GM10248 (cell line): ENCODE measurements at regions of chr2 and their contacts with region 1.

Region 1: GRCh38 chr2:187581125-187581896 is 27.1 kb upstream of the TFPI start:
- DNase-seq: no peak
- CTCF ChIP-seq: peak; percentile 65

Region 2: DNA sequence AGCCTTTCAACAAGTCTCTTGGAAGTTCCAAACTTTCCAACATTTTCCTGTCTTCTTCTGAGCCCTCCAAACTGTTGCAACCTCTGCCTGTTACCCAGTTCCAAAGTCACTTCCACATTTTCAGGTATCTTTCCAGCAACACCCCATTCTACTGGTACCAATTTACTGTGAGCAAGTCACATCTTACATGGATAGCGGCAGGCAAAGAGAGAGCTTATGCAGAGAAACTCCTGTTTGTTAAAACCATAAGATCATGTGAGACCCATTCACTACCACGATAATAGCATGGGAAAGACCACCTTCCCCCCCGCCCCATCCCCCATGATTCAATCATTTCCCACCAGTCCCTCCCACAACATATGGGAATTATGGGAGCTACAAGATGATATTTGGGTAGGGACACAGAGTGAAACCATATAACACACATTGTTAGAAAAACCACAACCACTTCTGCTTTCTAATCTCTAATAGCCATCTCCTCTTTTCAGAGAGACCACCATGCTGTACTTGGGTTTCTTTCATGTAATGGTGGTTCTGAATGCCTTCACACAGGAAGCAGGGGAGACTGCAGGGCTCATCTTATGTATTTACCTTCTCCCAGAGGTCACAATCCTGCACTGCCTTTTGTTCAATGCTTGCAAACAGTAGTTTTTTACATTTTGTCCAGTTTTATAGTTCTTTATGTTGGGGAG is 87.3 kb before region 1 on chr2:
- CTCF ChIA-PET with region 1: interaction called, 89 read pairs
- POLR2A ChIA-PET with region 1: no interaction called
- DNase-seq: no peak
- CTCF ChIP-seq: no peak

Region 3: DNA sequence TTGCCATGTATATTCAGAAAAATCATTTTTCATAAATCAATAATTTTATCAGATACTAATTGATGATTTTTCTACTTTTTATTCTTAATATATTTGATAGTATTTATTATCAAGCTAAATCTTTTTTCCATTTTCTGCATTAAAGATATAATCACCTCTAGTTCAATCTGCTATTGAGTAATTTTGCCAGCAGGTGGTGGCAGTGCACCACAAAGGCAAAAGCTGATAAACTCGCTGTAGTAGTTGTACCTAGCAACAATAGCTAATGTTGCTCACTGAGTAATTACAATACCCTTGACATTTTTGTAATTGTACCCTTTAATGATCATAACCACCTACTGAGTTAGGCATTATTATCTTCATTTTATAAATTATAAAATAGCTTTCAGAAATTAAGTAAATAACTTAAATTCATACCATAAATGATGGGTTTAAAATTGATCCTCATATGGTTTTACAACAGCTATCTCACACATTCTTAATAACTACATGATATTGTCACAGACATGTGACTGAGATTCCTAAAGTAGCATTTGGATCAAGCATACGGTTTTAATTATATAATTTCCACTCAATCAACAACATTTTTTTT is 81.3 kb before region 1 on chr2:
- CTCF ChIA-PET with region 1: interaction called, 89 read pairs
- POLR2A ChIA-PET with region 1: no interaction called
- DNase-seq: peak; percentile 26
- CTCF ChIP-seq: peak; percentile 80

Region 4: DNA sequence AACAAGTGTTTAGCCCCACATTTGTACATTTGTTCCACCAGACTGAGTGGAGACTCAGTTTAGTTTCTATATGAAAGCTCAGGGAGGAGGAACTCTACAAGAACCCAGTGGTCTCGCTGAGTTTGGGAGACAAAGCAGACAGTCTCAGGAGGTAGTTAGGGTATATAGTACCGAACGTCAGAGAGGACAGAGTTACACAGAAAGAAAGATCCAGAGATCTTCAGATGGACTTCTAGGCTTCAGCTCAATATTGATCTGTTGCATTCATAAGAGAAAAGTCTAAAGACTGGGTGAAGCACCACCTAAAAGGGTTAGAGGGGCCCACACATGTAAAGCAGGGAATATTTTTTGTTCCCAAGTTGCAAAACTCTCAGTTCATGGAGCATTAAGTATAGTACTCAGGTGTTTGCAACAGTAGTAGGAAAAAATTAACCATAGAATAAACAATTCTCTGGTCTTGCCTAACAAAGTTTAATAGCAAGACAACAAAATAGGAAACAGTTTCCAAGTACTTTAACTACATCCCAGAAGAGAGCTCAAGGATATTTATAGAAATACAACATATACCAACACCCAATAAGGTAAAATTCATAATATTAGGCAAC is 31.3 kb before region 1 on chr2:
- CTCF ChIA-PET with region 1: interaction called, 16 read pairs
- POLR2A ChIA-PET with region 1: no interaction called
- DNase-seq: no peak
- CTCF ChIP-seq: no peak

Region 5: GRCh38 chr2:187567126-187567525 is 14.2 kb before region 1 on chr2:
- CTCF ChIA-PET with region 1: interaction called, 35 read pairs
- POLR2A ChIA-PET with region 1: no interaction called
- DNase-seq: no peak
- CTCF ChIP-seq: no peak

Region 6: GRCh38 chr2:187842978-187843847 is 261.9 kb after region 1 on chr2:
- CTCF ChIA-PET with region 1: interaction called, 45 read pairs
- POLR2A ChIA-PET with region 1: no interaction called
- DNase-seq: peak; percentile 17
- CTCF ChIP-seq: peak; percentile 61